ENCODE measurements at regions of chr7 and their contacts with region 1.

Region 1: GRCh38 chr7:51324206-51324884 is 7.7 kb upstream of the COBL start:
- DNase-seq: no peak
- ATAC-seq: no peak
- H3K4me3 Mint-ChIP-seq: no peak overlapping the region
- H3K27ac Mint-ChIP-seq: peak overlapping the region; percentile 37
- H3K4me1 Mint-ChIP-seq: peaks cover 82% of the 10 kb centered on the region
- H3K27me3 Mint-ChIP-seq: peaks cover 32% of the 10 kb centered on the region
- CTCF ChIP-seq: no peak

Region 2: GRCh38 chr7:50667789-50668226 is 656.5 kb before region 1 on chr7:
- CTCF ChIA-PET with region 1: no interaction called
- POLR2A ChIA-PET with region 1: no interaction called
- DNase-seq: no peak
- ATAC-seq: no peak
- H3K4me3 Mint-ChIP-seq: no peak overlapping the region
- H3K27ac Mint-ChIP-seq: no peak overlapping the region
- H3K4me1 Mint-ChIP-seq: no peaks in the 10 kb centered on the region
- H3K27me3 Mint-ChIP-seq: no peaks in the 10 kb centered on the region
- CTCF ChIP-seq: no peak

Region 3: GRCh38 chr7:50970092-50970491 is 354.3 kb before region 1 on chr7:
- CTCF ChIA-PET with region 1: no interaction called
- POLR2A ChIA-PET with region 1: no interaction called
- DNase-seq: no peak
- ATAC-seq: peak; percentile 88
- H3K4me3 Mint-ChIP-seq: no peak overlapping the region
- H3K27ac Mint-ChIP-seq: no peak overlapping the region; the same call in 1 of the 2 replicates
- H3K4me1 Mint-ChIP-seq: peaks cover 3% of the 10 kb centered on the region; the same call in 1 of the 2 replicates
- H3K27me3 Mint-ChIP-seq: peaks cover 1% of the 10 kb centered on the region
- CTCF ChIP-seq: no peak

Region 4: GRCh38 chr7:51111241-51111940 is 213.0 kb before region 1 on chr7:
- CTCF ChIA-PET with region 1: no interaction called
- POLR2A ChIA-PET with region 1: no interaction called
- DNase-seq: no peak
- ATAC-seq: no peak
- H3K4me3 Mint-ChIP-seq: no peak overlapping the region
- H3K27ac Mint-ChIP-seq: no peak overlapping the region
- H3K4me1 Mint-ChIP-seq: peaks cover 34% of the 10 kb centered on the region
- H3K27me3 Mint-ChIP-seq: no peaks in the 10 kb centered on the region
- CTCF ChIP-seq: no peak

Region 5: DNA sequence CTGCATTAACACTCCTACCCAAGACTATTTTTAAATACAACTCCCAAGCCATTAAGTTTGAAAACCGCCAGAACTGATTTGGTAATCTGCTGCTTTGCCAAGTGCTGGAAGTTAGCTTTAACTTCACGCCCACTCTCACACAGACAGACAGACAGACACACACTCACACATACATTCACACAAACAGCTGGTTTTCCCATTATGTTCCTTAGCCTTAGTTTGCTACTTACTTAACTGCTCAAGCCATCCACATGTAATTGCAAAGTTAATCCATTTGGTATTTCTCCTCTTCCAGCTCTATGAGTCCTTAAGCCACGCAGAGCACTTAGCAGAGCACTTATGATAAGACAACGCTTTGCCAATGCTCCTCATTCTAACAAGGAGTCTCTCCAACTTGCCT is 16.1 kb before region 1 on chr7:
- CTCF ChIA-PET with region 1: interaction called, 21 read pairs
- POLR2A ChIA-PET with region 1: interaction called, 3 read pairs
- DNase-seq: no peak
- ATAC-seq: no peak
- H3K4me3 Mint-ChIP-seq: no peak overlapping the region
- H3K27ac Mint-ChIP-seq: peak overlapping the region; percentile 57
- H3K4me1 Mint-ChIP-seq: peaks cover 70% of the 10 kb centered on the region
- H3K27me3 Mint-ChIP-seq: no peaks in the 10 kb centered on the region
- CTCF ChIP-seq: no peak

Region 6: DNA sequence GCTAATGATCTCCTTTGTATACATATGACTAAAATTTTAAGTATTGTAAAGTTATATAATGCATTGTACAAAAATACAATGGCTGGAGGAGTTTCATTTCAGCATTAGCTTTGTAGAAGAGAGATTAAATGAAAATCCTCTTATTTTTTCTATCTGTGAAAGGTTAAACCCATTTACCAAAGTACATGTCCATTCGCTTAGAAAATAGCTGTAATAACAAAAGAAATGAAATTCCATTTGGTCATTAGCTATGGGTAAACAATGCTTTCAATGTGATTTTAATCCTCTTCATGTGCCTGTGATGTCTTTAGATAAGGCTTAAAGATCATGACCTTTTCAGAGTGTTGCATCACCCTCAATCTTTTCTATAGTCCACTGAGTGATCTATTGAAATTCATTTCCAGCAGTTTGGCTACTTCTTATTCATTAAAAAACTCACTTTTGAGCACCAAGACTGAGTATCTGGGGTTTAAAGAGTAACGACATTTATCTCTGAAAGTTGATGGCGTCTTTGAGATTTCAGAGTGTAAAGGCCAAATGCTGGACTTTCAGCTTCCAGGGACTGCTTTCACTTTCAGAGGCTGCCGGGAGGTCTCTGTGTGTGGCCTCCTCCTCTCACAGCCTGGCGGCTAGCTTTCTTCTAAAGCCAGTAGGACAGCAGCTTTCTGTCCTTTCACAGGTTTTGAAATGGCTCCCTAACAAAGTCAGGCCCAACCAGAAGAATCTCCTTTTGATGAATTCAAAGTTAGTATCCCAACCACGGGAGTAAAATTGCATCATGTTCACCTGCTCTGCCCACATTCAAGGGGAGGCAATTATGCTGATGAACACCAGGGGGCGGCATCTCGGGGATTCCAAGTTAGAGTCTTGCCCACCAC is 693.7 kb after region 1 on chr7:
- CTCF ChIA-PET with region 1: no interaction called
- POLR2A ChIA-PET with region 1: no interaction called
- DNase-seq: peak; percentile 85
- ATAC-seq: peak; percentile 93
- H3K4me3 Mint-ChIP-seq: peak overlapping the region; percentile 22; the same call in 1 of the 2 replicates
- H3K27ac Mint-ChIP-seq: peak overlapping the region; percentile 76; the same call in 1 of the 2 replicates
- H3K4me1 Mint-ChIP-seq: peaks cover 14% of the 10 kb centered on the region
- H3K27me3 Mint-ChIP-seq: no peaks in the 10 kb centered on the region; the same call in 1 of the 2 replicates
- CTCF ChIP-seq: peak; percentile 83